RWPE1 (cell line): ENCODE measurements at regions of chr17 and their contacts with region 1.

Region 1: GRCh38 chr17:59795963-59796538 is 88.6 kb downstream of the VMP1 start:
- DNase-seq: no peak
- H3K27ac ChIP-seq: no peak overlapping the region
- CTCF ChIP-seq: no peak

Region 2: DNA sequence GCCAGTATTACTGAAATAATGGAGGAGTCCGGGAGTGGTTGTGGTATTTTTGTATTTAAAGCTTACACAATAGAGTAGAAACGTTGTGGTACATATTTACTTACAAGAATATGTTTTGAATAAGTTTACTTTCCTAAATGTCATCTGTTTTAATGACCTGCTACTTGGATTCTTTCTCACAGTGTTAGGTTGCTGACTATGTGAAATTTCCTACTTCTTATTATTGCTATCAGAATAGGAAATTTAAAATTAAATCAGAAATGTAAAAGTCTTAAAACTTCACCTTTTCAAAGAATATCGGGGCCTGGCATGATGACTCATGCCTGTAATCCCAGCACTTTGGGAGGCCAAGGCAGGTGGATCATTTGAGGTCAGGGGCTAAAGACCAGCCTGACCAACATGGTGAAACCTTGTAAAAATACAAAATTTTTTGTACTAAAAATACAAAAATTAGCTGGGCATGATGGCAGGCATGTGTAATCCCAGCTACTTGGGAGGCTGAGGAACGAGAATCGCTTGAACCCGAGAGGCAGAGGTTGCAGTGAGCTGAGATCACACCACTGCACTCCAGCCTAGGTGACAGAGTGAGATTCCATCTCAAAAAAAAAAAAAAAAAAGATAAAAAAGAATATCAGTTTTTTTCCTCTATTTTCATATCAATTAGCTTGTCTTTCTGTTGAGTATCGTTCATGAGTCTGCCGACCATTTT is 10.8 kb before region 1 on chr17:
- CTCF ChIA-PET with region 1: no interaction called
- POLR2A ChIA-PET with region 1: interaction called, 10 read pairs
- DNase-seq: no peak
- H3K27ac ChIP-seq: peak overlapping the region; percentile 82
- CTCF ChIP-seq: no peak

Region 3: GRCh38 chr17:59876107-59876506 is 80.1 kb after region 1 on chr17:
- CTCF ChIA-PET with region 1: no interaction called
- POLR2A ChIA-PET with region 1: no interaction called
- DNase-seq: no peak
- H3K27ac ChIP-seq: peak overlapping the region; percentile 12
- CTCF ChIP-seq: no peak

Region 4: GRCh38 chr17:59941131-59941530 is 145.1 kb after region 1 on chr17:
- CTCF ChIA-PET with region 1: no interaction called
- POLR2A ChIA-PET with region 1: no interaction called
- DNase-seq: no peak
- H3K27ac ChIP-seq: no peak overlapping the region
- CTCF ChIP-seq: no peak